ENCODE measurements at regions of chr14 and their contacts with region 1.

Region 1: DNA sequence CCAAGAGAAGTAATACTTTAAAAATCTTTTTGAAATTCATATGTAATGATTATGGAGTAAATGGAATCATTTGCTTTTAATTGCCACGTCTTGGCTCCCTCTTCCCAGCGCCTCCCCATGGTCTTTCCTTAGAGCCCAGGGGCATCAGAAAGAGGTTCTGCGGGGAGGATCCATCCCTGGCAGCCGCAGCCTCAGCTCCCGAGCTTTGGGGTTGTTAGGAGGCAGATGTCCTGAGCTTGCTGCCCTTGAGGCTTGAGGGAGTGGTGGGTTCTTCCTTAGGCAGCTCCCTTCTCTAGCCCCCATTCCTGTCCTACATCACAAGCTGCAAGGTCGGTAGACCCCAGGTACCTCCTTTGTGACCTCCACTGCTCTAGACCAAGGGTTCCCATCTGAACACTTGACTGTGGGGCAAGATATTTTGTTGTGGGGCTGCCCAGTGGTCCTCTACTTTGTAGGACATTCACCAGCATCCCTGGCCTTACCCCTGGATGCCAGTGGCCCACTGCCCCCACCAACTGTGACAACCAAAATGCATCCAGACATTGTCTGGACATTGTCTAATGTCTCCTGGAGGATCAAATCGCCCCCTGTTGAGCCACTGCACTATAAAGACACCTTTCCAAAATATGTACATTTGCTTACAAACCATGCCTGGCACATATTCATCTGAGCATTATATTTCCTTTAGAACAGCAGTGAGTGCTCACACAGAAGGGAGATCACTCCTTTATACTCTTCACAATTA is 6.3 kb downstream of the PPP2R5C start:
- DNase-seq: no peak
- ATAC-seq: no peak
- H3K4me3 ChIP-seq: no peak overlapping the region
- H3K27ac ChIP-seq: no peak overlapping the region
- H3K4me1 ChIP-seq: no peaks in the 10 kb centered on the region
- H3K27me3 ChIP-seq: no peaks in the 10 kb centered on the region; a peak in 1 of 4 replicates
- CTCF ChIP-seq: no peak
- EP300 ChIP-seq: no peak
- POLR2A ChIP-seq: no peak
- RAD21 ChIP-seq: no peak

Region 2: DNA sequence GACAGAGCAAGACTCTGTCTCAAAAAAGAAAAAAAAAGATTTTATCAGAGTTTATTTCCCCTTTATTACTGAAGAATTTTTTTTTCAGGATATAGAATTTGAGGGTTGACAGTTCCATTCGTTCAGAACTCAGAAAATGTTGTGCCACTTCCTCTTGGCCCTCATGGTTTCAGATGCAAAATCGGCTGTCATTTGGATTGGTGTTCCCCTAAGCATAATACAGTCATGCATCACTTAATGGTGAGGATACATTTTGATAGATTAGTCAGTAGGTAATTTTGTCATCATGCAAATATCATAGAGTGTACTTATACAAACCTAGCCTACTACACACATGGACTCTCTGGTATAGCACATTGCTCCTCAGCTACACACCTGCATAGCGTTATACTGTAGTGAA is 600.4 kb before region 1 on chr14:
- CTCF ChIA-PET with region 1: no interaction called
- POLR2A ChIA-PET with region 1: no interaction called
- RAD21 ChIA-PET with region 1: no interaction called
- SMC1A ChIA-PET with region 1: no interaction called
- in situ Hi-C with region 1: no loop called
- intact Hi-C with region 1: no loop called
- DNase-seq: no peak
- ATAC-seq: no peak
- H3K4me3 ChIP-seq: no peak overlapping the region
- H3K27ac ChIP-seq: no peak overlapping the region
- H3K4me1 ChIP-seq: no peaks in the 10 kb centered on the region
- H3K27me3 ChIP-seq: no peaks in the 10 kb centered on the region
- CTCF ChIP-seq: no peak
- EP300 ChIP-seq: no peak
- POLR2A ChIP-seq: no peak
- RAD21 ChIP-seq: no peak

Region 3: GRCh38 chr14:101707068-101707842 is 60.5 kb before region 1 on chr14:
- CTCF ChIA-PET with region 1: interaction called, 19 read pairs
- POLR2A ChIA-PET with region 1: interaction called, 8 read pairs
- RAD21 ChIA-PET with region 1: interaction called, 17 read pairs
- SMC1A ChIA-PET with region 1: interaction called, 16 read pairs
- in situ Hi-C with region 1: no loop called
- intact Hi-C with region 1: loop called (anchors 2 kb)
- DNase-seq: peak; percentile 53
- ATAC-seq: peak; percentile 78
- H3K4me3 ChIP-seq: no peak overlapping the region
- H3K27ac ChIP-seq: no peak overlapping the region
- H3K4me1 ChIP-seq: peaks cover 14% of the 10 kb centered on the region
- H3K27me3 ChIP-seq: no peaks in the 10 kb centered on the region; a peak in 2 of 4 replicates
- CTCF ChIP-seq: peak; percentile 65 to 87 (median 80)
- EP300 ChIP-seq: no peak
- POLR2A ChIP-seq: no peak
- RAD21 ChIP-seq: peak; percentile 92

Region 4: GRCh38 chr14:101791919-101792572 is 24.3 kb after region 1 on chr14:
- CTCF ChIA-PET with region 1: interaction called, 12 read pairs
- POLR2A ChIA-PET with region 1: no interaction called
- RAD21 ChIA-PET with region 1: no interaction called
- SMC1A ChIA-PET with region 1: interaction called, 10 read pairs
- in situ Hi-C with region 1: no loop called
- intact Hi-C with region 1: no loop called
- DNase-seq: no peak
- ATAC-seq: peak; percentile 76
- H3K4me3 ChIP-seq: 0 out of 2 replicates have a peak overlapping the region, but pooled peaks have one; percentile 35
- H3K27ac ChIP-seq: peak overlapping the region; percentile 43; the same call in 1 of the 2 replicates
- H3K4me1 ChIP-seq: peaks cover 4% of the 10 kb centered on the region
- H3K27me3 ChIP-seq: no peaks in the 10 kb centered on the region
- CTCF ChIP-seq: no peak
- EP300 ChIP-seq: no peak
- POLR2A ChIP-seq: no peak
- RAD21 ChIP-seq: no peak

Region 5: GRCh38 chr14:101843665-101844064 is 75.9 kb after region 1 on chr14:
- CTCF ChIA-PET with region 1: interaction called, 72 read pairs
- POLR2A ChIA-PET with region 1: interaction called, 4 read pairs
- RAD21 ChIA-PET with region 1: interaction called, 52 read pairs
- SMC1A ChIA-PET with region 1: interaction called, 34 read pairs
- in situ Hi-C with region 1: no loop called
- intact Hi-C with region 1: loop called (anchors 1 kb)
- DNase-seq: peak; percentile 69
- ATAC-seq: peak; percentile 87
- H3K4me3 ChIP-seq: no peak overlapping the region
- H3K27ac ChIP-seq: peak overlapping the region; percentile 61
- H3K4me1 ChIP-seq: peaks cover 44% of the 10 kb centered on the region
- H3K27me3 ChIP-seq: no peaks in the 10 kb centered on the region
- CTCF ChIP-seq: peak; percentile 65 to 80 (median 68); a peak in 5 of 6 replicates
- EP300 ChIP-seq: no peak
- POLR2A ChIP-seq: no peak
- RAD21 ChIP-seq: peak; percentile 78

Region 6: GRCh38 chr14:101957406-101958234 is 189.8 kb after region 1 on chr14:
- CTCF ChIA-PET with region 1: interaction called, 80 read pairs
- POLR2A ChIA-PET with region 1: no interaction called
- RAD21 ChIA-PET with region 1: interaction called, 7 read pairs
- SMC1A ChIA-PET with region 1: interaction called, 28 read pairs
- in situ Hi-C with region 1: no loop called
- intact Hi-C with region 1: loop called (anchors 5 kb)
- DNase-seq: no peak
- ATAC-seq: no peak
- H3K4me3 ChIP-seq: no peak overlapping the region
- H3K27ac ChIP-seq: no peak overlapping the region
- H3K4me1 ChIP-seq: no peaks in the 10 kb centered on the region
- H3K27me3 ChIP-seq: no peaks in the 10 kb centered on the region
- CTCF ChIP-seq: no peak
- EP300 ChIP-seq: no peak
- POLR2A ChIP-seq: no peak
- RAD21 ChIP-seq: no peak

Region 7: GRCh38 chr14:102096214-102097114 is 328.7 kb after region 1 on chr14:
- CTCF ChIA-PET with region 1: interaction called, 17 read pairs
- POLR2A ChIA-PET with region 1: no interaction called
- RAD21 ChIA-PET with region 1: interaction called, 10 read pairs
- SMC1A ChIA-PET with region 1: interaction called, 6 read pairs
- in situ Hi-C with region 1: no loop called
- intact Hi-C with region 1: no loop called
- DNase-seq: no peak
- ATAC-seq: peak; percentile 88
- H3K4me3 ChIP-seq: no peak overlapping the region
- H3K27ac ChIP-seq: no peak overlapping the region
- H3K4me1 ChIP-seq: no peaks in the 10 kb centered on the region; the same call in 1 of the 2 replicates
- H3K27me3 ChIP-seq: no peaks in the 10 kb centered on the region
- CTCF ChIP-seq: peak; percentile 78 to 92 (median 88)
- EP300 ChIP-seq: no peak
- POLR2A ChIP-seq: no peak
- RAD21 ChIP-seq: peak; percentile 90

Measured in GM12878 (cell line).